Calu3 (cell line): ENCODE measurements at regions of chr11 and their contacts with region 1.

Region 1: DNA sequence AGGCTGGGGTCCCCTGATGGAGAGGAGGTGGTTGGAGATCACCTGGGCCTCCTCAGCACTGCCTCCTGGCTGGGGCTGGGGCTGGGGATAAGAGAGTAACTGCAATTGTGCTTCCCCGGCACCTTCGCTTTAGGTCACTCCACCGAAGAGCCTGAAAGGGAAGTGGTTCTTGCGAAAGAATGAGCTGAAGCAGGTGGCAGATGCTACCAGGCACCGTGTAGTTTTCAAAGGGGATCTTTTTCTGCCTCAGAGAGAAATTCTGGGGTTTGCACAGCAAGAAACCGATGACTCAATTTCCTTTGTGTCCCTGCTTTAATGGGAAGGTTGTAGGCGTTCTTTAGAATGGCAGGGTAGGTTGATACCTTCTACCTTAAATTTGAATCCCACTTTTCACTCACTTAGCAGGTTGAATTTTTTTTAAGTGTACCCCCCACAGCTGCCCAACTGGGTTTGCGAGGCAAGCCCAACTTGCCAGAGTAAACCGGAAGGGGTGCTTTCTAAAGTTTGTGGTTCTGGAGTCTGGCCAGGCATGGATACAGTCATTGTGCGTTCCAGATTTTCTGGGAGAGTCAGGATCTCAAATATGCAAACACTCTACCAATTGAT is 5.3 kb downstream of the CD44 start:
- DNase-seq: peak; percentile 24
- H3K4me3 Mint-ChIP-seq: peak overlapping the region; percentile 87
- H3K27ac Mint-ChIP-seq: peak overlapping the region; percentile 84
- H3K4me1 Mint-ChIP-seq: peaks cover 60% of the 10 kb centered on the region
- H3K27me3 Mint-ChIP-seq: no peaks in the 10 kb centered on the region
- CTCF ChIP-seq: no peak

Region 2: GRCh38 chr11:34926101-34926830 is 218.0 kb before region 1 on chr11:
- CTCF ChIA-PET with region 1: no interaction called
- intact Hi-C with region 1: loop called (anchors 5 kb)
- DNase-seq: peak; percentile 38
- H3K4me3 Mint-ChIP-seq: peak overlapping the region; percentile 5
- H3K27ac Mint-ChIP-seq: peak overlapping the region; percentile 38
- H3K4me1 Mint-ChIP-seq: peaks cover 49% of the 10 kb centered on the region
- H3K27me3 Mint-ChIP-seq: no peaks in the 10 kb centered on the region
- CTCF ChIP-seq: peak; percentile 54

Region 3: GRCh38 chr11:34997952-34998528 is 146.2 kb before region 1 on chr11:
- CTCF ChIA-PET with region 1: interaction called, 3 read pairs
- intact Hi-C with region 1: loop called (anchors 2 kb)
- DNase-seq: no peak
- H3K4me3 Mint-ChIP-seq: peak overlapping the region; percentile 57
- H3K27ac Mint-ChIP-seq: peak overlapping the region; percentile 82
- H3K4me1 Mint-ChIP-seq: peaks cover 23% of the 10 kb centered on the region
- H3K27me3 Mint-ChIP-seq: no peaks in the 10 kb centered on the region
- CTCF ChIP-seq: no peak

Region 4: DNA sequence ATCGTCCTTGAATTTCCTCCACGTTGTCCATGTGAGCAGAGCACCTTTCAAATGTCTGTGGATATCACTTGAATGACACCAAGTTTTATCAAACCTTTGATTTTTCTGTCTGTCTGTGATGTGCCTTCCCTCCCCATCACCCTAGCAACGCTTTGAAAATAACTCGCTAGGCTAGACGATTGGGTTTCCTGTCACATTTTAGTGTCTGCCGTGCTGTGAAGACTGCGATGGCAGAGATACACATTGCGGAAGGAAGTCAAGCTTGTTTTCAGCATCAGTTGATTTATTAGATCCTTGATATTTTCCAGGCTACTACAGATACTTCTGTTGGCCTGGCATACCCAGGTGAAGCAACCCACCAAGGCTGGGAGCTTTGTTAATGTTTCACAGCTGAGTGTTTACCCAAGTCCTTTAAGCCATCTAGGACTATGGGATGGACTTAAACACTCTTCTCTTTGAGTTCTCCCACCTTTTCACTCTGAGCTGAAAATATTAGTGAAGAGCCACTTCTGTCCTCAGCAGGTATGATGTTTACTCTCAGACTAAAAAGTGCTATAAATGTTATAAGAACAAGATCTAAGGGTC is 98.9 kb before region 1 on chr11:
- CTCF ChIA-PET with region 1: no interaction called
- intact Hi-C with region 1: no loop called
- DNase-seq: no peak
- H3K4me3 Mint-ChIP-seq: no peak overlapping the region
- H3K27ac Mint-ChIP-seq: no peak overlapping the region
- H3K4me1 Mint-ChIP-seq: peaks cover 15% of the 10 kb centered on the region
- H3K27me3 Mint-ChIP-seq: no peaks in the 10 kb centered on the region
- CTCF ChIP-seq: no peak

Region 5: DNA sequence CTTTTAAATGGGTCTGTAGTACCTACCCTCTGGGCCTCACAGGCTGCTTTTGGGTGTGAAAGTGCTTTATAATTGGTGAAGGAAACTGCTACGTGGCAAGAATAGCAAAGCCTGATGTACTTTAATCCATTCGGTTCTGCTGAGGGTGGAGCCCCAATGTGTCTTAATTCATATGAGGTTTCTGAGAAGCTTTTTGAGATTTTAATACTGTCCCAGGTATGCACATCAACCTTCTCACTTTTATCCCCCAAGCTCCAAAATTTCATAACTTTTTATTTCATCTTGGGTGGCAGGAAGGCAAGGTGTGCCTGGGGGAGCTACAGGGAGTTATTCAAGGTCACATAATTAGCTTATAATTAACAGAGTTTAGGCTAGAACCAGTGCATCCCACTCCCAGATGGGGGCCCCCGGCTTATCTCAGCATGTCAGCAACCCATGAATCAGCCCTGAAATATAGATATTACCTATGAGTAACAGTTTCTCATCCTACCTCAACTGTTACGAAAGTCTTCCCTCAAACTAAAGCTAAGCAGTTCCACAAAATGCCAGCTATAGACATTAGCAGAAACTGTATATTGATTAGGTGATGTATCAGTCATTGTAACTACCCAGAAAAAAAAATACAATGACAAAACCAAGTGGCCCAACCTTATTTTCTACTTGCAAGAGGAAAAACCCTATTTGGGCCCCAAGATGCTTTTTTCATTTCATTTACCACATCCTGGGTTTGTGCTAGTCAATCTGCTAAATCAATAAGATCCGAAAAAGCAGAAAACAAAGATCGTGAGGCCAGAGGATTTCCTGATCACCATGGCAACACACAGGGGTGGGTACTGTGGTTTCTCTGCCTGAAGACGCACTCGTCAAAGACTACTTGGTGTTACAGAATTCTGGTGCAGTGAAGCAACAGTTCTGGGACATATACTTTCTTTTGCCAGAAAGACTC is 21.5 kb after region 1 on chr11:
- CTCF ChIA-PET with region 1: interaction called, 8 read pairs
- intact Hi-C with region 1: loop called (anchors 2 kb)
- DNase-seq: peak; percentile 70
- H3K4me3 Mint-ChIP-seq: peak overlapping the region; percentile 51
- H3K27ac Mint-ChIP-seq: peak overlapping the region; percentile 99
- H3K4me1 Mint-ChIP-seq: peaks cover 98% of the 10 kb centered on the region
- H3K27me3 Mint-ChIP-seq: no peaks in the 10 kb centered on the region
- CTCF ChIP-seq: no peak

Region 6: DNA sequence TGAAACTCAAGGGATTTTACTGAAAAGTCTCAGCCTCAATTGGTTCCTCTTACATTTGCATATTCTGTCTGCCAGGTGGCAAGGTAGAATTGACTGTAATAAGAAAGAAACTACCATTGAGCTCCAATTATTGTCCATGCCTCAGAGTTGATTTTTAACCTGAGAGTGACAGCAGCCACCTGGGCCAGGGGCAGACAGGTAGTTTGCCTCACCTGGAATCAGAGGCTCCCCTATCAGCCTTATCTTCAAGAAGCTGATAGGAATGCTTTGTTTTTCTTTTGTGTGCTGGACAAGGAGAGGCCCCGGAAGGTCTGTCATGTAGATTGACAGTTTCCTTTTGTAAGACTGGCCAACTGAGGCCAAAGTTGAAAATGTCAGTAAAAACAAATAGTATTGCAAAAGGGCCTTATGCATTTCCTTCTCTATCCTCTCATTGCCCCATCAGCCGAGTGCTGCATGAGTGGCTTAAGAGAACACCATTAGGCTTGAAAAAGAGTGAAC is 28.8 kb after region 1 on chr11:
- CTCF ChIA-PET with region 1: interaction called, 8 read pairs
- intact Hi-C with region 1: loop called (anchors 2 kb)
- DNase-seq: peak; percentile 68
- H3K4me3 Mint-ChIP-seq: peak overlapping the region; percentile 34
- H3K27ac Mint-ChIP-seq: peak overlapping the region; percentile 92
- H3K4me1 Mint-ChIP-seq: peaks cover 74% of the 10 kb centered on the region
- H3K27me3 Mint-ChIP-seq: no peaks in the 10 kb centered on the region
- CTCF ChIP-seq: no peak

Region 7: DNA sequence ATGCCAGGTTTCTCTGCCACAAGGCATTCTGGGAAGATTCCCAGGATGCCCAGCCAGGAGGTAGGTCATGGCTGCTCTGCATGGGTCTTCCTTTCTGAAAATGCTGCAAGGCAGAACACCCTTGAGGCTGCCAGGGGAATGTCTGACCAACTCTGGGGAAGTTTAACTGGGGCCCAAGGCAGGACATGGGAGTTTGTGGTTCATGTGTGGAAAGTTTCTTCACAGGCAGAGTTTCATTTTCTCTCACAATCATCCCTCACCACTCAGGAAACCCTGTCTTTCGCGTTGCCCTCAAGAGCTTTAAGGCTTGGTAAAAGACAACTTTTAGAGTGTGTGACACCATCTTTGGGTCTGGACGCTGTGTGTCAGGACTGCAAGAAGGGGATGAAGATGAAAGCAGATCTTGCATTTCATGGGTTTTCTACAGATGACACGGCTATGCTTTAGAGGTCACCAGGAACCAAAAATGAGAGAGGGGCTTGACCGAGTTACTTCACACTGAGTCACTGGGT is 128.2 kb after region 1 on chr11:
- CTCF ChIA-PET with region 1: no interaction called
- intact Hi-C with region 1: no loop called
- DNase-seq: no peak
- H3K4me3 Mint-ChIP-seq: no peak overlapping the region
- H3K27ac Mint-ChIP-seq: no peak overlapping the region
- H3K4me1 Mint-ChIP-seq: peaks cover 31% of the 10 kb centered on the region
- H3K27me3 Mint-ChIP-seq: no peaks in the 10 kb centered on the region
- CTCF ChIP-seq: no peak